ENCODE measurements at regions of chr9 and their contacts with region 1.

Region 1: DNA sequence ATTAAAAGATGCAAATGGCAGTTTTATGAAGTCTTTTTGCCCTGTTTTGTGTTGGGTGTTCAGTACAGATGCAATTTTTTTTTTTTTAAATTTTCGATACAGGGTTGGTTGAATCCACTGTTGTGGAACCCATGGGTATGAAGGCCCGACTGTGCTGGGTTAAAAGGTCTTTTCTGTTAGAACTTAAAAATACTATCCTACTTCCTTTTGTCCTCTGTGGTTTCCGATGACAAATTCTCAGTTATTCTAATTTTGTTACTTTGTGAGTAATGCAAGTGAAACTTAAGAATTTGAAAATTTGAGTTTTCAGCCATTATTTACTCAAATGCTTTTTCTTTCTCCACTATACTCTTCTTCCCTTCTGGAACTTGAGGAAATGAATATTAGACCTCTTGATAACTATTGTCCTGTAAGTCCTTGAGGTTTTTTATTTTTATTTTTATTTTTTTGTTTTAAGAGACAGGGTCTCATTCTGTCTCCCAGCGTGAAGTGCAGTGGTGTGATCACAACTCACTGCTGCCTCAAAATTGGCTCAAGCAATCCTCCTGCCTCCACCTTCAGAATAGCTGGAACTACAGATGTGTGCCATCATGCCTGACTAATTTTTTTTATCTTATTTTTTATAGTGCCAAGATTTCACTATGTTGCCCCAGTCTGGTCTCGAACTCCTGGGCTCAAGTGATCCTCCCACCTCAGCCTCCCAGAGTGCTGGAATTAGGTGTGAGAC is 67.5 kb downstream of the ZCCHC7 start:
- DNase-seq: no peak
- H3K4me3 Mint-ChIP-seq: peak overlapping the region; percentile 15
- H3K27ac Mint-ChIP-seq: peak overlapping the region; percentile 91
- H3K4me1 Mint-ChIP-seq: peaks cover 29% of the 10 kb centered on the region
- H3K27me3 Mint-ChIP-seq: no peaks in the 10 kb centered on the region

Region 2: DNA sequence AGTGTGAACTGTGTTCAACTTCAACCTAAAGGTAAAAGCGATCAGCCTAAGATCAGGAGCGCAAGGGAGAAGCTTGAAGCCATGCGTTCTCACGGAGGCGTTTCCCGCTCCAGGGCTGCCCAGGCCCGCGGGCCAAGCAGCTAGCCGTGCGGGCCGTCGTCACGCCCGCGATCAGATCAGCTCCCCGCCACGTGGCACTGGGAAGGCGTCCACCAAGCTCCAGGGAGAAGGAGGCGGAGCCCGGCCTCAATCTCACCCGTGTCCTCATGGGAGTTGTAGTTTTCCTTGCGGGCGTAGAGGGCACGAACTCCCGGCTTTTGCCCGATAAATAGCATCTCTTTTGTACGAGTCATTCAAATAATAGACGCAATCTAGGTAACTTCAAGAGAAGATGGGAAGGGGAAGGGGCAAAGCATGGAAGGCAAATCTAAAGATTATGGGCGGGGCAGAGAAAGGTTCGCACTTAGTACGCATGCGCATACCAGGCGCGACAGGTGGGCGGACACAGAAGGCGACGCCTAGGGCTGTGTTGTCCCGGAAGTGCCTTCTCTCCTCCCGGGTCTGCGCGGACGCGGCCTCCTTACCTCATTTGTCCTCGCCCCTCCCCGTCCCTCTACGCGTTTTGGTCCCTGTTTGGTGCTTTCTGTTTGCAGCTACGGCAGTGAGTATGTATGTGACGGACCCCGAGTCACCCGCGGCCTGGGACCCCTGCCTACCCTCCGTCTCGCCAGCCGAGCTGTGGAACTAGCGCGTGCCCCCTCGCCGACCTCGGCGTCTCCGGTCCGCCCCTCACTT is 108.3 kb before region 1 on chr9:
- intact Hi-C with region 1: no loop called
- DNase-seq: peak; percentile 91
- H3K4me3 Mint-ChIP-seq: peak overlapping the region; percentile 96
- H3K27ac Mint-ChIP-seq: peak overlapping the region; percentile 96
- H3K4me1 Mint-ChIP-seq: peaks cover 33% of the 10 kb centered on the region
- H3K27me3 Mint-ChIP-seq: peaks cover 3% of the 10 kb centered on the region

Region 3: GRCh38 chr9:37144762-37145161 is 43.1 kb before region 1 on chr9:
- intact Hi-C with region 1: loop called (anchors 5 kb)
- DNase-seq: no peak
- H3K4me3 Mint-ChIP-seq: no peak overlapping the region
- H3K27ac Mint-ChIP-seq: no peak overlapping the region
- H3K4me1 Mint-ChIP-seq: peaks cover 38% of the 10 kb centered on the region
- H3K27me3 Mint-ChIP-seq: no peaks in the 10 kb centered on the region

Region 4: DNA sequence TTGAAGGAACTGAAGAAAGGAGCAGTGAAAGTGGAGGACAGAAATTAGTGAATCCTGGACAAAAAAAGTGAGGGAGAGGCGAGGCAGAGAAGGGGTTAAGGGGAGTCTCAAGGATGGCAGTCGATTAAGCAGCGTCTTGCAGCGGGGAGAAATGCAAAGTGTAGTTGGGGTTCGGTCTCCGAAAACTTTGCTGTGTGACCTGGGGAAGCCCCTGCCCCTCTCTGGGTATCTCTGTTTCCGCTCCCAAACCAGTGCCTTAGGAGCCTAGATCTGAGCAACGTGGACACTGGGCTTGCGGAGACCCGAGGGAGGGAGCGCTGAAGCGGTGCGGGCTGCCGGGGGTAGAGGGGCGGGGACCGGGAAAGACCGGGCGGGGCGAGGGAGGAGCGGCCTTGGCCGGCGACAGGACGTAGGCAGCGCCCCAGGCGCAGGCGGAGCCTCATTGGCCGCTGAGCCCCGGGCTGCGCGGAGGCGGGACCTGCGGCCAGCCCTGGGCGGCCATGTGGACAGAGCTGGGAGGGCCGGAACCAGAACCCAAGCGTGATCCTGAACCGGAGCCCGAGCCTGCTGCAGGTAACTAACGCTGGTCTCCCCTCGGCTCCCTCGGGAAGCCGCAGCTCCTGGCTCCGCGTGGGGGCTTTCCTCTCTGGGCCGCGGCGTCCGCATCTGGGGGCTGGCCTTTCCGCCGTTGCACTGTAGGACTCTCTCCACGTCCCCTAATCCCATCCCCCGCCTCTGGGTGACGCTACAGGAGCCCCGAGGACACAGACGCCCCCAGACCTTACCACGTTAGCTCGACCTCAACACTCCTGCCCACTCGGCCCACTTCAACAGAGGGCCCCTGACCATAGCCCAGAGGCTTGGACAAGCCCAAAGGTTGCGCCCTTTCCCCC is 1204.6 kb after region 1 on chr9 and contains the start of gene ALDH1B1:
- intact Hi-C with region 1: no loop called
- DNase-seq: peak; percentile 70
- H3K4me3 Mint-ChIP-seq: peak within 1 kb of the TSS; percentile 96
- H3K27ac Mint-ChIP-seq: peak within 1 kb of the TSS; percentile 90
- H3K4me1 Mint-ChIP-seq: peaks cover 16% of the 10 kb centered on the region
- H3K27me3 Mint-ChIP-seq: peaks cover 22% of the 10 kb centered on the region
- total RNA-seq, gene ALDH1B1: 37.7 and 39.3 TPM in 2 replicates